K562 (cell line): ENCODE measurements at regions of chr10 and their contacts with region 1.

Region 1: DNA sequence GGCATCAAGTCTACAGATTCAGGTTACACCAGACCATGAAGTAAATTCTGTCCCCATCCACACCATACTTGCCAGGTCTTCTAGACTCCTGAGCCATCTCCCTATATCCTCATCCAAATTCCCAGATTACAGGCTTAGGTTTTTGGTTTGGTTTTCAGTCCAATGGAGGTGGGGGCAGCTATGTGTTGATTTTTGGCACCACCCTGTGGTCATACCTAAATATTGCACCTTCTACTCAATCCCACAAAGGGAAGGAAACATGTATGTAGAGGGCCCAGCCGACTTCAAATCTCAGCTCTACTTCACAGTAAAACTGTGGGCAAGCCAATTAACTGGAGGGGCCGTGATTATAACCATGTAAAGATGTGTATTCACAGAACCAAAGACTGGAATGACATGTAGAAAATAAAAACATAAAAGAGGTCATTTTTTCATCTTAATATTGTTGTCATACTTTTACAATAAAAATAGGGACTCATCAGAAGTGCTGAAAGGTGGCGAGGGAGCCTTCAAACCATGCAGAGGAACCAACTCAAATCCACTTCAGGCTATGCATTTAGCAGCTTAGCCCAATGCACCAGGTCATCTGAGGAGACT is 19.8 kb downstream of the ERCC6 start:
- DNase-seq: peak; percentile 71 to 81 (median 80)
- ATAC-seq: peak; percentile 94
- H3K4me3 ChIP-seq: no peak overlapping the region
- H3K27ac ChIP-seq: no peak overlapping the region
- H3K4me1 ChIP-seq: no peaks in the 10 kb centered on the region
- H3K27me3 ChIP-seq: no peaks in the 10 kb centered on the region
- CTCF ChIP-seq: peak; percentile 74 to 88 (median 78)
- EP300 ChIP-seq: no peak
- POLR2A ChIP-seq: no peak
- RAD21 ChIP-seq: peak; percentile 83 to 88

Region 2: DNA sequence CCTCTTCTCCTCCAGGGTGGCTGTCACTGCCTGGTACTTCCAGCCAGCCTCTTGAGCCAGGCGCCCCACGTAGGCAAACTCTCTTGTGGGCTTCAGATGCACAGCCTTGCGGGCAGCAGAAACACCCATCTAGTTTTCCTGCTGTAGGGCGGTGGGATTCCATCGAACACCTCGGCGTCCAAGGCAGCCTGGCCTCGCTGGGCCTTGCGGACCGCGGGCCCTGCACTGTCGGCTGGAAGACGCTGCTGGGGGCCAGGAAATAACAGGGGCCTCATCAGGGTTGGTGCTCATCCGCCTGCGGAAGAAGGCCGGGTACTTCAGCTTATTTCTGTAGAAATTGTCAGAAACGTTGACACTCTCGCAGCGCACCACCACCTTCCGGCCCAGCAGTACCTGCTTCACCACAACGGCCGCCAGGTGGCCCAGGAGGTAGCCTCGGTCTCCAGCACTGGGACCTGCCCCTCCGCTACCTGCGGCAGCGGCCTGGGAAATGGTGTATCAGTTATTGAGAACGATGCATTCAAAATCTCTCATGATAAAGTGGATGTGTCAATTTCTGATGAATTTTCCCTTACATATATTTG is 773.3 kb before region 1 on chr10:
- CTCF ChIA-PET with region 1: no interaction called
- POLR2A ChIA-PET with region 1: no interaction called
- in situ Hi-C with region 1: no loop called
- intact Hi-C with region 1: loop called (anchors 10 kb)
- DNase-seq: peak; percentile 27 to 51 (median 41)
- ATAC-seq: peak; percentile 99
- H3K4me3 ChIP-seq: no peak overlapping the region
- H3K27ac ChIP-seq: no peak overlapping the region
- H3K4me1 ChIP-seq: peaks cover 0 to 4% of the 10 kb centered on the region in 2 experiments; a peak in 1 of 5 replicates
- H3K27me3 ChIP-seq: peaks cover 2 to 17% of the 10 kb centered on the region in 2 experiments; a peak in 2 of 5 replicates
- CTCF ChIP-seq: peak; percentile 55 to 77 (median 65)
- EP300 ChIP-seq: no peak
- POLR2A ChIP-seq: no peak
- RAD21 ChIP-seq: peak in 1 of 2 experiments; percentile 54; a peak in 2 of 4 replicates

Region 3: GRCh38 chr10:48976196-48976595 is 542.9 kb before region 1 on chr10:
- CTCF ChIA-PET with region 1: interaction called, 10 read pairs
- POLR2A ChIA-PET with region 1: interaction called, 3 read pairs
- in situ Hi-C with region 1: loop called (anchors 5 kb)
- intact Hi-C with region 1: loop called (anchors 1 kb)
- DNase-seq: peak; percentile 32 to 36 (median 32)
- ATAC-seq: peak; percentile 79
- H3K4me3 ChIP-seq: no peak overlapping the region
- H3K27ac ChIP-seq: no peak overlapping the region
- H3K4me1 ChIP-seq: peaks cover 0 to under 1% of the 10 kb centered on the region in 2 experiments; a peak in 2 of 5 replicates
- H3K27me3 ChIP-seq: peaks cover 0 to 20% of the 10 kb centered on the region in 2 experiments; a peak in 4 of 5 replicates
- CTCF ChIP-seq: peak; percentile 45 to 65 (median 53); a peak in 4 of 6 replicates
- EP300 ChIP-seq: no peak
- POLR2A ChIP-seq: no peak
- RAD21 ChIP-seq: peak; percentile 59 to 72

Region 4: DNA sequence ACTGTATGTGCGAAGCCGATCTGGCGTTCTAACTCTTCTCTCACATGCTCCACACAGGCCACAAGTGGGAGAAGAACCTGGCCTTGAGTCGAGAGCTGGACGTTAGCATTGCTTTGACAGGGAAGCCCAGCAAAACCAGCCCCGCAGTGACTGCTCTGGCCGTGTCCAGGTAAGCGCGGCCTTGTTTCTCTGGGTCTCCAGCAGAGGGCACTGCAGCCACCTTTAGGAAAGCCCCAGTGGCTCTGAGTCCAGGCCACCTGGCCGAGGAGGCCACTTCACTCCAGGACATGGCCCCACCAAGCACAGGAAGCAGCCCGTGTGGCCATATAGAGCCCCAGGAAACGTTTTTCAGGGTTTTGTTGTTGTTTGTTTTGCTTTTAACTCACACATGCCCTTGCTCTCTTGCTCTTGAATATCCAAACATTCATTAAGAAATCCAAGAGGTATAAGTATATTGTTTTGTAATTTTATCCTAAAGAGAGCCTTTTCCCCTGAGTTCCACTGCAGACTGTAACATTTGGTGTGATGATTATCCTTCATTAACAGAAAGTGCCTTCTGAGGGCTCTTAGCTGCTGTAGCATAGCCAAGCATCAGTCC is 537.7 kb before region 1 on chr10:
- CTCF ChIA-PET with region 1: interaction called, 10 read pairs
- POLR2A ChIA-PET with region 1: no interaction called
- in situ Hi-C with region 1: loop called (anchors 5 kb)
- intact Hi-C with region 1: loop called (anchors 1 kb)
- DNase-seq: peak; percentile 84 to 93 (median 88)
- ATAC-seq: peak; percentile 98
- H3K4me3 ChIP-seq: no peak overlapping the region
- H3K27ac ChIP-seq: no peak overlapping the region
- H3K4me1 ChIP-seq: peaks cover 4 to 9% of the 10 kb centered on the region in 2 experiments; a peak in 2 of 5 replicates
- H3K27me3 ChIP-seq: peaks cover 0 to 13% of the 10 kb centered on the region in 2 experiments; a peak in 2 of 5 replicates
- CTCF ChIP-seq: peak; percentile 93 to 97 (median 94)
- EP300 ChIP-seq: no peak
- POLR2A ChIP-seq: no peak
- RAD21 ChIP-seq: peak; percentile 90 to 93

Region 5: DNA sequence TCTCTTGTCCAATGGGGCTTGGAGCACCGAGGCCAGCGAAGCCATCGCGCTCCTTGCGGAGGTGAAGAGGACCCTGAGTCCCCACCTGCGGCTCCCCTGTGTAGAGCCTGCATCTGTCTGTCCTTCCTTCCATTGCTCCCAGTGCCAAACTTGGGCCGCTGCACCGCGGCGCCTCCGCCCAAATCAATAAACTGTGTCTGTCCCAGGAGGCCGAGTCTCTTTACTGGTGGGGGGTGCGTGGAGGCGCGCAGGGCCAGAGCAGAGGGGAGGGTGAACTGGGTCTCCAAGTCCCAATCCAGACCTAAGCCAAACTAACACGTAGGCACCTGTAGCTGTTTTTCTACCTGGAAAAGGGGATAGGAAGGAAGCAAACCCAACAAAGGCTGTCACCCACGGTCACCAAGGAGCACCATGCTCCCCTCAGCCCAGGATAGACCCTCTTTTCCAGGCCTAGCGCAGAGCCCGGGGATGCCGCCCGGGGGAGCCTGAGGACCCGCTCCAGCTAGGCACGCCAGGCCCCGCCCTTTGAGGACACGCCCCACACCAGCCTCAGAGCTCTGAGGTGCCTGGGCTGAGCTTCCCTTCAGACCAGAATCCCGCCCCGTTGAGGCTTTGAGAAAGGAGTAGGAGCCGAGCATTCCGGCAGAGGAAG is 93.6 kb after region 1 on chr10:
- CTCF ChIA-PET with region 1: no interaction called
- POLR2A ChIA-PET with region 1: no interaction called
- in situ Hi-C with region 1: no loop called
- intact Hi-C with region 1: no loop called
- DNase-seq: peak; percentile 16 to 69 (median 58)
- ATAC-seq: peak; percentile 85
- H3K4me3 ChIP-seq: no peak overlapping the region
- H3K27ac ChIP-seq: no peak overlapping the region
- H3K4me1 ChIP-seq: peaks cover 0 to 20% of the 10 kb centered on the region in 2 experiments; a peak in 2 of 5 replicates
- H3K27me3 ChIP-seq: peaks cover 16 to 46% of the 10 kb centered on the region in 2 experiments; a peak in 3 of 5 replicates
- CTCF ChIP-seq: 0 out of 6 replicates have a peak, but pooled peaks of 2 of the 3 experiments have one; percentile 12 to 32
- EP300 ChIP-seq: no peak
- POLR2A ChIP-seq: no peak
- RAD21 ChIP-seq: no peak